ENCODE measurements at regions of chr13 and their contacts with region 1.

Region 1: GRCh38 chr13:67792151-67792676 is 562.1 kb upstream of the PCDH9 start:
- DNase-seq: no peak
- ATAC-seq: no peak
- H3K4me3 ChIP-seq: no peak overlapping the region
- H3K4me3 Mint-ChIP-seq: no peak overlapping the region
- H3K27ac ChIP-seq: no peak overlapping the region
- H3K27ac Mint-ChIP-seq: no peak overlapping the region
- H3K4me1 ChIP-seq: no peaks in the 10 kb centered on the region
- H3K4me1 Mint-ChIP-seq: no peaks in the 10 kb centered on the region
- H3K27me3 ChIP-seq: no peaks in the 10 kb centered on the region
- H3K27me3 Mint-ChIP-seq: no peaks in the 10 kb centered on the region
- CTCF ChIP-seq: no peak

Region 2: GRCh38 chr13:66899955-66900354 is 892.3 kb before region 1 on chr13:
- CTCF ChIA-PET with region 1: no interaction called
- POLR2A ChIA-PET with region 1: no interaction called
- intact Hi-C with region 1: loop called in 1 of 2 experiments (anchors 5 kb)
- DNase-seq: no peak
- ATAC-seq: no peak
- H3K4me3 ChIP-seq: no peak overlapping the region
- H3K4me3 Mint-ChIP-seq: no peak overlapping the region
- H3K27ac ChIP-seq: no peak overlapping the region
- H3K27ac Mint-ChIP-seq: no peak overlapping the region
- H3K4me1 ChIP-seq: no peaks in the 10 kb centered on the region
- H3K4me1 Mint-ChIP-seq: no peaks in the 10 kb centered on the region
- H3K27me3 ChIP-seq: no peaks in the 10 kb centered on the region
- H3K27me3 Mint-ChIP-seq: no peaks in the 10 kb centered on the region
- CTCF ChIP-seq: no peak